CD8-positive, alpha-beta T cell (primary cell): ENCODE measurements at regions of chr12 and their contacts with region 1.

Region 1: DNA sequence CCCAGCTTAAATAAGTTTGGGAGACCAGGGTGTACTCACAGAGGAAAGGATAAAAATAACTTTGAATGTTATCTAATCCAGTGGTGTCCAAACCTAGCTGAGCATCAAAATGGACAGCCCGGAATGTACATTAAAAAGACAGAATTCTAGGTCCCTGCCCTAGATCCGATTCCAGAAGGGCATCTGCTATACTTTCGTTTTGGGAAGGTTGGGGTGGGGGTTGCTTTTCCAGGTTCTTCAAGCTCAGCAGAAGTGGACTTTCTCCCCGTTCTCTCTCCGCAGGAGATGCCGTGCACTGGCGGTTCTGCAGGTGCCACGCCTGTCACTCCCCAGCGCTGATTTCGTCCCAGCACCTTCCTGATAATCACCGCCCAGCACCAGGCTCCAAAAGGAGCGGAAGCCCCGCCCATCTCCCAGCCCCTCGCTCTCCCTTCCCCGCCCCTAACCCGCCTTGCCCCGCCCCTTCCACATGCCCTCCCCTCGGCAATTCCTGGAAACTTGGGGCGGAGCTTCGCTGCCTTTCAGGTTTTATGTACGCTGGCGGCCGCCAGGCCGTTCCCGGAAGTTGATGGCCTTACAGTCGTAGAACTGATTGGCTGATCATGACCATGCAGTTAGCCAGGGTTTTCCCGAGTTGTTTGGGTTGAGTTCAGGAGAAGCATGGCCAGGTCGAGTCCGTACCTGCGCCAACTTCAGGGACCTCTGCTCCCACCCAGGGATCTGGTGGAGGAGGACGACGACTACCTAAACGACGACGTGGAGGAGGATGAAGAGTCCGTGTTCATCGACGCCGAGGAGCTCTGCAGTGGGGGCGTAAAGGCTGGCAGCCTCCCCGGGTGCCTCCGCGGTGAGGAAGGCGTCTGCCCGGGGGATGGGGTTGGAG is at the start of gene HELB:
- DNase-seq: peak; percentile 90 to 98 (median 96)
- ATAC-seq: peak; percentile 76
- H3K4me3 ChIP-seq: peak within 1 kb of the TSS; percentile 91 to 97
- H3K4me3 Mint-ChIP-seq: peak within 1 kb of the TSS; percentile 97
- H3K27ac ChIP-seq: peak within 1 kb of the TSS; percentile 77 to 92
- H3K27ac Mint-ChIP-seq: peak within 1 kb of the TSS; percentile 98
- H3K4me1 ChIP-seq: peaks cover 31% of the 10 kb centered on the region
- H3K4me1 Mint-ChIP-seq: peaks cover 47% of the 10 kb centered on the region
- H3K27me3 ChIP-seq: no peaks in the 10 kb centered on the region
- H3K27me3 Mint-ChIP-seq: no peaks in the 10 kb centered on the region
- CTCF ChIP-seq: no peak
- total RNA-seq, gene HELB: 26.9 to 27.0 TPM

Region 2: DNA sequence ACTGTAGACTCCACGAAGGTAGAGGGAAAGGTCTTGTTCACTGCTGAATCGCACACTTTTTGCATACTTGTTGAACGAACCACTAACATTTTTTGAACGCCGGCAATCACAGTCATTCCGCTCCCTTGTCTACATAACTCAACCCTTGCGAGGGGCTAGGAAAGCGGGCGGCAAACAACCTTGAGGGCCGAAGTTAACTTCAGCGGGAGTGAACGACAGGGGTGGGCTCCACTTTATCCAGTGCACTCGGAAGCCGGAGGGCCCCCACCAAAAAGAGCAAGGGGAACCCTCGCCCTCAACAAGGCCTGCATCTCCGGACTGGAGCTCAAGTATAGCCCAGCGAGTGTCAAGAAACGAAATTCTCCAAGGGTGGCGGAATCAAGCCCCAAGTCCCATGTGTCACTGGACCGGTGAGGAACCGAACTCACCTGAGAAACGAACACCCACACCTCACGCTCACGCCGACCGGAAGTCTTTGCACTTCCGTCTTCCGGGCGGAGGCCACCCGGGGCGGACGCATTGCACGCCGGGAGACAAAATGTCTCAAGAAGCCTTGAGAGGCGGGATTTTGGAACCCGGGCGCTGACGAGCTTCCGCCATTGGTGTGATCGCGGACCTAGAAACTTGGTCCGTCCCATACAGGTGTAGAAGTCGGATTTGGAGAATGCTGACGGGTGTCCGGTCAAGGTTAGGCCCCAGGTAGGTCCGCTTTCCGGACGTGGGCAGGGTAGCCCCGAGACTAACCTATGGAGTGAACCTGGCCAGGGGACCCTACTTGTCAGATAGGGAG is 171.7 kb before region 1 on chr12 and contains the start of gene LLPH:
- CTCF ChIA-PET with region 1: no interaction called
- POLR2A ChIA-PET with region 1: interaction called, 7 read pairs
- intact Hi-C with region 1: loop called in 1 of 2 experiments (anchors 1 kb)
- DNase-seq: peak; percentile 75 to 94 (median 89)
- ATAC-seq: peak; percentile 92
- H3K4me3 ChIP-seq: peak within 1 kb of the TSS; percentile 91 to 97
- H3K4me3 Mint-ChIP-seq: peak within 1 kb of the TSS; percentile 96
- H3K27ac ChIP-seq: peak within 1 kb of the TSS; percentile 86 to 91
- H3K27ac Mint-ChIP-seq: peak within 1 kb of the TSS; percentile 99
- H3K4me1 ChIP-seq: peaks cover 22% of the 10 kb centered on the region
- H3K4me1 Mint-ChIP-seq: peaks cover 59% of the 10 kb centered on the region
- H3K27me3 ChIP-seq: no peaks in the 10 kb centered on the region
- H3K27me3 Mint-ChIP-seq: no peaks in the 10 kb centered on the region
- CTCF ChIP-seq: no peak
- total RNA-seq, gene LLPH: 29.1 to 30.9 TPM

Region 3: GRCh38 chr12:66169221-66170170 is 132.7 kb before region 1 on chr12 and contains the start of gene TMBIM4:
- CTCF ChIA-PET with region 1: no interaction called
- POLR2A ChIA-PET with region 1: interaction called, 14 read pairs
- intact Hi-C with region 1: loop called (anchors 2 kb)
- DNase-seq: peak; percentile 62 to 93 (median 84)
- ATAC-seq: peak; percentile 79
- H3K4me3 ChIP-seq: peak within 1 kb of the TSS; percentile 93 to 96
- H3K4me3 Mint-ChIP-seq: peak within 1 kb of the TSS; percentile 95
- H3K27ac ChIP-seq: peak within 1 kb of the TSS; percentile 97
- H3K27ac Mint-ChIP-seq: peak within 1 kb of the TSS; percentile 99
- H3K4me1 ChIP-seq: peaks cover 17% of the 10 kb centered on the region
- H3K4me1 Mint-ChIP-seq: peaks cover 51% of the 10 kb centered on the region
- H3K27me3 ChIP-seq: no peaks in the 10 kb centered on the region
- H3K27me3 Mint-ChIP-seq: peaks cover 2% of the 10 kb centered on the region
- CTCF ChIP-seq: peak; percentile 34
- total RNA-seq, gene TMBIM4: 22.4 to 22.7 TPM

Region 4: GRCh38 chr12:66269757-66270383 is 32.3 kb before region 1 on chr12:
- CTCF ChIA-PET with region 1: interaction called, 13 read pairs
- POLR2A ChIA-PET with region 1: interaction called, 6 read pairs
- intact Hi-C with region 1: no loop called
- DNase-seq: peak in 3 of 9 experiments; percentile 13 to 65 (median 56)
- ATAC-seq: peak; percentile 62
- H3K4me3 ChIP-seq: no peak overlapping the region
- H3K4me3 Mint-ChIP-seq: no peak overlapping the region
- H3K27ac ChIP-seq: no peak overlapping the region
- H3K27ac Mint-ChIP-seq: no peak overlapping the region
- H3K4me1 ChIP-seq: no peaks in the 10 kb centered on the region
- H3K4me1 Mint-ChIP-seq: peaks cover 7% of the 10 kb centered on the region
- H3K27me3 ChIP-seq: no peaks in the 10 kb centered on the region
- H3K27me3 Mint-ChIP-seq: peaks cover 2% of the 10 kb centered on the region
- CTCF ChIP-seq: peak; percentile 72

Region 5: GRCh38 chr12:66279123-66279712 is 23.0 kb before region 1 on chr12:
- CTCF ChIA-PET with region 1: interaction called, 9 read pairs
- POLR2A ChIA-PET with region 1: interaction called, 4 read pairs
- intact Hi-C with region 1: loop called in 1 of 2 experiments (anchors 1 kb)
- DNase-seq: peak in 8 of 9 experiments; percentile 18 to 73 (median 45)
- ATAC-seq: peak; percentile 70
- H3K4me3 ChIP-seq: no peak overlapping the region
- H3K4me3 Mint-ChIP-seq: peak overlapping the region; percentile 12
- H3K27ac ChIP-seq: no peak overlapping the region
- H3K27ac Mint-ChIP-seq: no peak overlapping the region
- H3K4me1 ChIP-seq: peaks cover 24% of the 10 kb centered on the region
- H3K4me1 Mint-ChIP-seq: peaks cover 47% of the 10 kb centered on the region
- H3K27me3 ChIP-seq: no peaks in the 10 kb centered on the region
- H3K27me3 Mint-ChIP-seq: no peaks in the 10 kb centered on the region
- CTCF ChIP-seq: peak; percentile 63

Region 6: GRCh38 chr12:66288121-66288520 is 14.1 kb before region 1 on chr12:
- CTCF ChIA-PET with region 1: interaction called, 5 read pairs
- POLR2A ChIA-PET with region 1: interaction called, 30 read pairs
- intact Hi-C with region 1: loop called (anchors 1 kb)
- DNase-seq: peak in 8 of 9 experiments; percentile 38 to 91 (median 68)
- ATAC-seq: peak; percentile 98
- H3K4me3 ChIP-seq: peak overlapping the region in 1 of 2 experiments; percentile 33
- H3K4me3 Mint-ChIP-seq: peak overlapping the region; percentile 72
- H3K27ac ChIP-seq: peak overlapping the region in 1 of 2 experiments; percentile 9
- H3K27ac Mint-ChIP-seq: peak overlapping the region; percentile 83
- H3K4me1 ChIP-seq: peaks cover 77% of the 10 kb centered on the region
- H3K4me1 Mint-ChIP-seq: peaks cover 80% of the 10 kb centered on the region
- H3K27me3 ChIP-seq: no peaks in the 10 kb centered on the region
- H3K27me3 Mint-ChIP-seq: no peaks in the 10 kb centered on the region
- CTCF ChIP-seq: no peak

Region 7: GRCh38 chr12:66319266-66319954 is 17.2 kb after region 1 on chr12:
- CTCF ChIA-PET with region 1: no interaction called
- POLR2A ChIA-PET with region 1: interaction called, 3 read pairs
- intact Hi-C with region 1: loop called in 1 of 2 experiments (anchors 2 kb)
- DNase-seq: no peak
- ATAC-seq: no peak
- H3K4me3 ChIP-seq: no peak overlapping the region
- H3K4me3 Mint-ChIP-seq: no peak overlapping the region
- H3K27ac ChIP-seq: no peak overlapping the region
- H3K27ac Mint-ChIP-seq: peak overlapping the region; percentile 49
- H3K4me1 ChIP-seq: peaks cover 15% of the 10 kb centered on the region
- H3K4me1 Mint-ChIP-seq: peaks cover 69% of the 10 kb centered on the region
- H3K27me3 ChIP-seq: no peaks in the 10 kb centered on the region
- H3K27me3 Mint-ChIP-seq: no peaks in the 10 kb centered on the region
- CTCF ChIP-seq: no peak

Region 8: GRCh38 chr12:66482351-66483203 is 180.4 kb after region 1 on chr12:
- CTCF ChIA-PET with region 1: no interaction called
- POLR2A ChIA-PET with region 1: no interaction called
- intact Hi-C with region 1: no loop called
- DNase-seq: no peak
- ATAC-seq: no peak
- H3K4me3 ChIP-seq: no peak overlapping the region
- H3K4me3 Mint-ChIP-seq: no peak overlapping the region
- H3K27ac ChIP-seq: no peak overlapping the region
- H3K27ac Mint-ChIP-seq: no peak overlapping the region
- H3K4me1 ChIP-seq: no peaks in the 10 kb centered on the region
- H3K4me1 Mint-ChIP-seq: no peaks in the 10 kb centered on the region
- H3K27me3 ChIP-seq: no peaks in the 10 kb centered on the region
- H3K27me3 Mint-ChIP-seq: peaks cover 5% of the 10 kb centered on the region
- CTCF ChIP-seq: no peak